Heart left ventricle (tissue), 16 donors: ENCODE measurements at regions of chr15 and their contacts with region 1.

Region 1: DNA sequence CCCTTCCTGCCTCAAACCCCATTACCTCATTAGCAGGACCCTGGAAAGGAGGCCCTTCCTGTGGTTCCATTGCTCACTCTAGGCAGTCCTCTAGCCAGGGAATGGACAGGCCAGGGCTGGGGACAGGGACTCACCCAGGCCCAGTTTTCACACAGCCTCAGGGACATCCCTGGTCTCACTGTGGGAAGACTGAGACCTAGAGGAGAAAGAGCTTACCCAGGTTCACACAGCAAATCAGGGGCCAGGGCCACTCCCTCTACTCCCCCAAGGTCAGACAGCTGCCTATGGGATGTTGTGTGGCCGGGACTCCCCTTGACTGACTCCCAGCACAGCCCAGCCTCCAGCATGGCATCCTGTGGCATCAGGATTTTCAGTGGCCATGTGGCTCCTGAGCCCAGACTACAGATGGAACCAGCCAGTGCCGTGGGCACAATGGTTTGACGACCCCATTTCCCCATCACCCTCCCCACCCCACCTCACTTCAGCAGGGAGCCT is 49.3 kb downstream of the ADAMTS7 start:
- DNase-seq: peak in 1 of 5 donors; percentile 21
- ATAC-seq: peak in 1 of 4 donors; percentile 0
- H3K4me3 ChIP-seq: no peak overlapping the region
- H3K27ac ChIP-seq: peak overlapping the region in 10 of 12 donors; percentile 33 to 64 (median 42)
- H3K4me1 ChIP-seq: peaks cover 16 to 63% (median 42%) of the 10 kb centered on the region in 12 donors
- H3K27me3 ChIP-seq: no peaks in the 10 kb centered on the region
- CTCF ChIP-seq: no peak
- POLR2A ChIP-seq: no peak

Region 2: GRCh38 chr15:78778422-78778821 is 16.5 kb after region 1 on chr15:
- intact Hi-C with region 1: loop called in 1 of 10 experiments (anchors 1 kb)
- DNase-seq: no peak
- ATAC-seq: no peak
- H3K4me3 ChIP-seq: no peak overlapping the region
- H3K27ac ChIP-seq: peak overlapping the region in 9 of 12 donors; percentile 28 to 71 (median 54)
- H3K4me1 ChIP-seq: peaks cover 0 to 35% (median 20%) of the 10 kb centered on the region in 12 donors
- H3K27me3 ChIP-seq: no peaks in the 10 kb centered on the region
- CTCF ChIP-seq: no peak
- POLR2A ChIP-seq: no peak

Region 3: DNA sequence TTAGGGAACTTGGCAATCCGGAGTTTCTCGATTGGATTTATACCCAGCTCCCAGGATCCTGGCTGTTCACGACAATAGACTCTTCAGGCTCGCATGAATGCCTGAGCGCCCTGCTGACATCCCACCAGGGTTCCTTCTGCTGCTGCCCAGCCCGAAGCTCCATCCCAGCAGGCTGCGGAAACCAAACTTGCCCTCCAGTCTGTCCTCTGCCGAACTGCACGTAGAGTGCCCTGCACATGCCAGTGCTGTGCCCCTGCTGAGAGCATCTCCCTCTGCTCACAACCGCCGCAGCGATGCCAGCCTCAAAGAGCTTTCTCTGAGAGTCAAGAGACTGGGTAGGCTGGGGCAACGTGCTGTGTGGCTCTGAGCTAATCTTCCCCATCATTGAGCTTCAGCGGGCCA is 42.5 kb after region 1 on chr15:
- intact Hi-C with region 1: loop called in 4 of 10 experiments (anchors 2 to 5 kb)
- DNase-seq: peak in 4 of 5 donors; percentile 40 to 75 (median 64)
- ATAC-seq: peak in 2 of 4 donors; percentile 62 to 63
- H3K4me3 ChIP-seq: no peak overlapping the region
- H3K27ac ChIP-seq: peak overlapping the region in 8 of 12 donors; percentile 6 to 61 (median 40)
- H3K4me1 ChIP-seq: peaks cover 0 to 27% (median 3%) of the 10 kb centered on the region in 12 donors
- H3K27me3 ChIP-seq: peaks cover 0 to 7% (median 0%) of the 10 kb centered on the region in 9 donors
- CTCF ChIP-seq: no peak
- POLR2A ChIP-seq: no peak

Region 4: DNA sequence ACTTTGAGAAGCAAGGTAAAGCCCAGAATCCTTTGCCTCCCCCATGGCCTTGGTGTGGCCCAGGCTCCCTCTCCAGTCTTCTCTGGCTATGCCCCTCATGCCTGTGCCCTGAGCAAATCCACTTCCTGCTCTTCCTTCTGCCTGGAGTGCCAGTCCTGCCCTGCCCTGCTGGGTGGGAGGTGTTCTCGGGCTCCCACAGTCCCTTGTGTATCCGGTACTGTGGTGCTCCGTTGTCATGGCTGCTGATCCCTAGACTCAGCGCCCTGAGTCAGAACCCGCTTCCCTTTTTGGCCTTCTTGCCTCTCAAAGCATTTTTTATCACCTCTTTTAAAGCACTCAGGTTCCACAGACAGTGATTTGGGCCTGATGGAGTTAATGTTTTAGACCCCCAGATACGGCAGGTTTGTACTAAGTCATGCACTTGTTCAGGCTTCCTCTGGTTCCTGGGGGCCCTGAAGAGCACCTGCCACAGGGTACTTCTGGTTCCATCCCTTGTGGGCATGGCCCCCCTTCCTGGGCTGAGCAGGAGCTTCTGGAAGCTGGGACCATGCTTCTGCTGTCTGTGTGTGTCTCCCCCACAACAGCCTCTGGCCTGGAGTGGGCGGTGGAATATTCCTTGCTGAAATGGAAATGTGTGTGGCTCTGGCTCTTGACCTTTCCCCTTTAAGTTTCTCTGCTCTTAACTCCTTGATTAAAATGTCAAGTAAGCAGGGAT is 78.9 kb after region 1 on chr15:
- intact Hi-C with region 1: no loop called
- DNase-seq: peak in 1 of 5 donors; percentile 31
- ATAC-seq: peak in 1 of 4 donors; percentile 69
- H3K4me3 ChIP-seq: no peak overlapping the region
- H3K27ac ChIP-seq: no peak overlapping the region
- H3K4me1 ChIP-seq: peaks cover 0 to 2% (median 0%) of the 10 kb centered on the region in 12 donors
- H3K27me3 ChIP-seq: no peaks in the 10 kb centered on the region
- CTCF ChIP-seq: no peak
- POLR2A ChIP-seq: no peak